Activated CD4-positive, alpha-beta memory T cell treated with anti-CD3 and anti-CD28 coated beads, Interleukin-2, amount 10 ng/mL, durations not matched to agents 7 days and 5 days (primary cell): ENCODE measurements at regions of chr5 and their contacts with region 1.

Region 1: GRCh38 chr5:137660349-137660817 is 75.5 kb downstream of the KLHL3 start:
- DNase-seq: peak; percentile 78
- H3K4me3 Mint-ChIP-seq: no peak overlapping the region
- H3K27ac Mint-ChIP-seq: no peak overlapping the region
- H3K4me1 Mint-ChIP-seq: peaks cover 5% of the 10 kb centered on the region
- H3K27me3 Mint-ChIP-seq: no peaks in the 10 kb centered on the region

Region 2: GRCh38 chr5:137629646-137630045 is 30.7 kb before region 1 on chr5:
- CTCF ChIA-PET with region 1: interaction called, 32 read pairs
- POLR2A ChIA-PET with region 1: no interaction called
- DNase-seq: no peak
- H3K4me3 Mint-ChIP-seq: no peak overlapping the region
- H3K27ac Mint-ChIP-seq: no peak overlapping the region
- H3K4me1 Mint-ChIP-seq: no peaks in the 10 kb centered on the region
- H3K27me3 Mint-ChIP-seq: no peaks in the 10 kb centered on the region

Region 3: GRCh38 chr5:137695651-137696428 is 35.5 kb after region 1 on chr5:
- CTCF ChIA-PET with region 1: interaction called, 58 read pairs
- POLR2A ChIA-PET with region 1: interaction called, 3 read pairs
- DNase-seq: peak; percentile 28
- H3K4me3 Mint-ChIP-seq: peak overlapping the region; percentile 31
- H3K27ac Mint-ChIP-seq: peak overlapping the region; percentile 86
- H3K4me1 Mint-ChIP-seq: peaks cover 29% of the 10 kb centered on the region
- H3K27me3 Mint-ChIP-seq: no peaks in the 10 kb centered on the region

Region 4: GRCh38 chr5:137735555-137736284 is 75.3 kb after region 1 on chr5 and contains the start of gene KLHL3:
- CTCF ChIA-PET with region 1: interaction called, 254 read pairs
- POLR2A ChIA-PET with region 1: interaction called, 20 read pairs
- DNase-seq: peak; percentile 31
- H3K4me3 Mint-ChIP-seq: no peak within 1 kb of the TSS
- H3K27ac Mint-ChIP-seq: no peak within 1 kb of the TSS
- H3K4me1 Mint-ChIP-seq: peaks cover 8% of the 10 kb centered on the region
- H3K27me3 Mint-ChIP-seq: peaks cover 6% of the 10 kb centered on the region
- total RNA-seq, gene KLHL3: 2.8 to 3.6 TPM

Region 5: DNA sequence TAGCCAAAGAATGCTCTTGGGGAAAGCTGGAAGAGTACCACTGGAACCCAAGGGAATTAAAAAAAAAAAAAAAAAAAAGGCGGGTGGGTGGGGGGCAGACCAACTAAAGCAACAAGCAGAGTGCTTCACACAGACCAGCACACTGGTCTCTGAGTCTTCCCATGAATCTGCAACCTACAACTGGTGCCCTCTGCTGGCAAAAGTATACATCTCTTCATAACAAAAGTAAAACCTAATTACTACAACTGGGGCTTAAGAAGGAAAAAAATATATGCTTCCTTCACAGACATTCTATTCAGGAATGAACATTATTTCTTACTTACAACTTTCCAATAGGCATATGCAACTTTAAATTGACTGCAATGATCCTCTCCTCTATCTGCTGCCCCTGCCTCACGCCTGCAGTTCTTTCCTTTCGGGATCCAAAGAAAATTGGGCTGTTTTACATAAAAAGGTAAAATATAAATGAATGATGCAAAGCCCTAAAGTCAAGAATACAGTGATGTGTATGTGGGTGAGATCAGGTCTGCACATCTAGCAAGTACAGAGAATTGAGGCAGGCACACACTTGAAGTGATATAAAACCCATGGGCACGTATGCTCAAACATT is 82.8 kb after region 1 on chr5:
- CTCF ChIA-PET with region 1: interaction called, 254 read pairs
- POLR2A ChIA-PET with region 1: interaction called, 20 read pairs
- DNase-seq: peak; percentile 61
- H3K4me3 Mint-ChIP-seq: no peak overlapping the region
- H3K27ac Mint-ChIP-seq: no peak overlapping the region
- H3K4me1 Mint-ChIP-seq: peaks cover 8% of the 10 kb centered on the region
- H3K27me3 Mint-ChIP-seq: no peaks in the 10 kb centered on the region